ENCODE measurements at regions of chr13 and their contacts with region 1.

Region 1: DNA sequence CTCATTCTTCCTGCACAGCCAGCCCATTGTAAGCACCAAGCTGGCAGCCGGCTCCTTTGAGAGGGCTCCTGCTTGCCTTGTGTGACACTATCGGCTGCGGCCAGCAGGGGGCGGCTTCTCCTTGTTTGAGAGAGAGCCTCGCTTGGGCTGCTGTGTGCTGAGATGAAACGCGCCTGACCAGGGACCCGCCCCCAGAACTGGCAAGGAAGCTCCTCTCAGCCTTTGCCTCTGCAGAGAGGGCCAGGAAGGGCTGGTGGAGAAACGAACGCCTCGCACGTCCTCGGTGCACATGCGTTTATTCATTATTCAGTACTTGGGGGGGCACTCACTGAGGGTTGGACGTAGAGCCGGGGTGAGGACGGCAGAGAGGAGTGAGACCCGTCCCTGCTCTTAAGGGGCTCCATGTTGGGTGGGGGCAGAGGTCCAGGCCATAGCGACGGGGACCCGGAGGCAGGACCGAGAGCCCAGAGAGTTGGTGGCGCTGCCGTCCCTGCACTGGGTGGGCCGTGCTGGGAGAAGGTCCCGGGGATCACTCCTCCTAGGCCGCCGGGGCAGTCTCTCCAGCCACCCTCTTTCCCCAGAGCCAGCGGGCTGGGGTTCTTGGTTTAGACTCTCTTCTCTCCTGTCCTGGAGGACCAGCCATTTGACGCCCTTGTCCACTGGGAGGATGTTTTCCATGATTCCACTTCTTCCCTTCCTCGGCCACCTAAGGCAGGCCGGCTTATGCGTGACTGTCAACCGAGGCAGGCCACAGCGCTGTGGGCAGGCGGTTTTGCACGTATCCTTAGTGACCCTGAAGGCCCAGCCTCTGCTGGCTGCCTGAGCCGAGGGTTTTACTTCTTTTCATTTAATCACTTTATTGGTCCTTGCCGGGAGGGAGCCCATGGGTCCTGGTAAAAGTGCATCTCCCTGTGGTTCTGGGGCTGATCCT is 174.5 kb downstream of the KATNAL1 start:
- DNase-seq: peak; percentile 84
- H3K4me3 ChIP-seq: peak overlapping the region in 1 of 4 donors; percentile 15
- H3K27ac ChIP-seq: peak overlapping the region in 2 of 4 donors; percentile 2 to 57
- H3K4me1 ChIP-seq: peaks cover 0 to 24% (median 5%) of the 10 kb centered on the region in 3 donors
- H3K27me3 ChIP-seq: peaks cover 0 to 4% (median 0%) of the 10 kb centered on the region in 4 donors
- CTCF ChIP-seq: peak; percentile 92 to 97 (median 96)
- POLR2A ChIP-seq: no peak

Region 2: DNA sequence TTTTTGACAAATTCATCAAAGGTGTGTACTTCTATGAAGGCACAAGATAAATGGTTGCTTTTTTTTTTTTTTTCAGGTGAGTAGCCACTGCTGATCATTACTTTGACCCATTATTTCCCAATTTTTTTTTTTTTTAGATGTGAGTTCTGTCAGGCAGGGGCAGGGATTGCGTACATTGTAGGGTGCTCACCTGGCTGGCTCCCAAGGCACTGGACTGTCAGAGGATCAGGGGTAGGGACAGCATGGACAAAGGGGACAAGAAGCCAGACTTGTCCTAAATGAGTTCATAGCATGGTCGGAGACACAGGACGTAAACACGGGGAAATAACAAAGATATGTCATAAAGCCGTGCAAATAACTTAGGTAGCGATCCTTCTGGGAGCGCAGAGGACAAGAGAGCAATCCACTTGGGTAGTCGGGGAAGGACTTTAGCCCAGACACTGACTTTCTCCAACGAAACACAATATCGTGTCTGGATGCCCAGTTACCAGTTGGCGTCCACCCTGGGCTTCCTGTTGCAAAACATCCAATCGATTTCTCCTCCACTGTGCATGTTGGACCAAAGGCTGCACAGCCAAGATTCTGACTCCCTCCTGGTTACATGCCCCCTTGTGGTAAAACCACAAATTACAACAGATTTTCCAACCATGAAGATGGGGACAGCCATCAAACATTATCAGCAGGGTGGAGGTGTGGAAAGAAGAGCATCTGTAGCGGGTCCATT is 201.9 kb after region 1 on chr13:
- intact Hi-C with region 1: loop called (anchors 10 kb)
- DNase-seq: no peak
- H3K4me3 ChIP-seq: no peak overlapping the region
- H3K27ac ChIP-seq: no peak overlapping the region
- H3K4me1 ChIP-seq: peaks cover 0 to 17% (median 2%) of the 10 kb centered on the region in 3 donors
- H3K27me3 ChIP-seq: no peaks in the 10 kb centered on the region
- CTCF ChIP-seq: peak in 4 of 6 experiments; percentile 21 to 48 (median 40)
- POLR2A ChIP-seq: no peak

Region 3: DNA sequence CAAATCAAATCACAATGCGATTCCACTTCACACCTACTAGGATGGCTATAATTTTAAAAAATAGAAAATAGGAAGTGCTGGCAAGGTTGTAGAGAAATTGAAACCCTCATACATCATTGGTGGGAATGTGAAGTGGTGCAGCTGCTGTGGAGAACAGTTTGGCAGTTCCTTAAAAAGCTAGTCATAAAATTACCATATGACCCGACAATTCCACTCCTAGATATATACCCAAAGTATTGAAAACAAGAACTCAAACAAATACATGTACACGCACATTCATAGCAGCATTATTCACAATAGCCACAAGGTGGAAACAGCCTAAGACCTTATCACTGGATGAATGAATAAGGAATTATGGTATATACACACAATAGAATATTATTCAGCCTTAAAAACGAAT is 320.8 kb after region 1 on chr13:
- intact Hi-C with region 1: loop called (anchors 10 kb)
- DNase-seq: no peak
- H3K4me3 ChIP-seq: no peak overlapping the region
- H3K27ac ChIP-seq: no peak overlapping the region
- H3K4me1 ChIP-seq: no peaks in the 10 kb centered on the region
- H3K27me3 ChIP-seq: no peaks in the 10 kb centered on the region
- CTCF ChIP-seq: peak in 2 of 6 experiments; percentile 29 to 40
- POLR2A ChIP-seq: no peak

Region 4: GRCh38 chr13:30802953-30803478 is 670.1 kb after region 1 on chr13:
- intact Hi-C with region 1: loop called (anchors 10 kb)
- DNase-seq: peak; percentile 9
- H3K4me3 ChIP-seq: peak overlapping the region; percentile 29 to 63 (median 42)
- H3K27ac ChIP-seq: peak overlapping the region; percentile 47 to 64 (median 56)
- H3K4me1 ChIP-seq: peaks cover 10 to 36% (median 12%) of the 10 kb centered on the region in 3 donors
- H3K27me3 ChIP-seq: no peaks in the 10 kb centered on the region
- CTCF ChIP-seq: peak; percentile 81 to 98 (median 94)
- POLR2A ChIP-seq: no peak